Dendritic cell treated with granulocyte-macrophage colony-stimulating factor and Interleukin-4, amounts not matched to agents 40 ng/mL and 50 ng/mL, for 4 days (primary cell): ENCODE measurements at regions of chr16 and their contacts with region 1.

Region 1: GRCh38 chr16:10846213-10846998 is 27.8 kb upstream of the TVP23A start:
- H3K4me3 Mint-ChIP-seq: peak overlapping the region; percentile 75
- H3K27ac Mint-ChIP-seq: peak overlapping the region; percentile 99
- H3K4me1 Mint-ChIP-seq: peaks cover 77% of the 10 kb centered on the region
- H3K27me3 Mint-ChIP-seq: no peaks in the 10 kb centered on the region

Region 2: DNA sequence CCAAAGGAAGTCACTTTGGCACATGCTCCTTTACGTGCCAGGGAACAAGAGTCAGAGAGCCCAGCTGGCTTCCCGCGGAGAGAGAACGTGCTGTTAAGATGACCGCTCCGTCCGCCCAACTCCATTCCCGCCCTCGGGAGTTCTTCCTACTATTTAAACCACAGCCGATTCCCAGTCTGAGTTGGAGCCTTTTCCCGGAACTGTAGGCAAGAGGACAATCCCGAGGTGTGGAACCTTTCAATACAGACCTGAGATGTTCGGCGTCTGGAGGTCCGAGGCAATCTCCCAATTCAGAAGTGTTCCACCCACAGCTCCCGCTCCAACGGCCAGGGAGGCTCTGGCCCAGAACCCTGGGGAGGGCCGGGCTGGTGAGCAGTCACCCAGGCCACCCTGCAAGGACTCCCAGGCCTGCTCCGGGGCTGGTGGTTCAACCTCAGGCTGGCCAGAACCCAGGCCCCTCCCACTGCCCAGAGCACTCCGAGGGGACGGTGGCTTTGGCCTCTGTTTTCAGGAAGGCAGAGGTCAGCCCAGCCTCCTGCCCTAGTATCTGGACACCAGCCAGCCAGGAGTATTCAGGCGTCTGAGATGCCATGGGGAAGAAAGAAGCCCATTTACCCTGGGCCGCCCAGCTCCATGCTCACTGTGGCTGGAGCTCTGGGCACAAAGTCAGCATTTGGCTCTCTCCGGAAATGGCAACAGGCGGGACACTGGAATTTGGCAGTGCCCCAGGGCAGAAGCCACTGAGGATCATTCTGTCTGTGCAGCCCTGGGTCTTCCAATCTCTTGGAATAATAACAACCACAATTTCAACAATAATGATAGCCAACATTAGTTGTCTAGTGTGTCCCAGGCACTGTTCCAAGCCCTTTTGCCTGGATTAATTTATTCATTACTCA is 287.4 kb before region 1 on chr16:
- intact Hi-C with region 1: no loop called
- H3K4me3 Mint-ChIP-seq: no peak overlapping the region
- H3K27ac Mint-ChIP-seq: no peak overlapping the region
- H3K4me1 Mint-ChIP-seq: peaks cover 30% of the 10 kb centered on the region
- H3K27me3 Mint-ChIP-seq: peaks cover 10% of the 10 kb centered on the region

Region 3: DNA sequence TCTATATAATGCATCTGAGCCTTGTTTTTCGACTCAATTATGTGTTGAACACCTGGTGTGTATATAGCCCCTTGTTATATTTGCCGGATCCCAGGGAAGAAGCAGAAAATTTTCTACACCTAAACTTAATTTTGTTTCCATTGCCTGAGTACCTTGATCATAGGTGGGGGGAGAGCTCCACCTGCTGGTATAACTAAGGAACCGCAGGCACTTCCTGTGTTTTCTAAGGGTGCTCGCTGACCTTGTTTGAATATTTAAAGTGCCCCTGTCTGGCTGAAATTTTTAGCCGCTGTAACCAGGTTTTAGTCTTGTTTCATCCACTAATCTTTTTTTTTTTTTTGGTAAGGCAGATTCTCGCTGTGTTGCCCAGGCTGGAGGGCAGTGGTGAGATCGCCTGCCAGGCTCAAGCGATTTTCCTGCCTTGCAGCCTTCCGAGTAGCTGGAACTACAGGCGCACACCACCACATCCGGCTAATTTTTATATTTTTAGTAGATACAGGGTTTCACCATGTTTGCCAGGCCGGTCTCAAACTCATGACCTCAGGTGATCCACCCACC is 109.3 kb before region 1 on chr16:
- intact Hi-C with region 1: no loop called
- H3K4me3 Mint-ChIP-seq: peak overlapping the region; percentile 66
- H3K27ac Mint-ChIP-seq: peak overlapping the region; percentile 76
- H3K4me1 Mint-ChIP-seq: peaks cover 37% of the 10 kb centered on the region
- H3K27me3 Mint-ChIP-seq: no peaks in the 10 kb centered on the region

Region 4: GRCh38 chr16:10862432-10862831 is 16.0 kb after region 1 on chr16:
- intact Hi-C with region 1: loop called (anchors 2 kb)
- H3K4me3 Mint-ChIP-seq: no peak overlapping the region
- H3K27ac Mint-ChIP-seq: peak overlapping the region; percentile 59
- H3K4me1 Mint-ChIP-seq: peaks cover 65% of the 10 kb centered on the region
- H3K27me3 Mint-ChIP-seq: no peaks in the 10 kb centered on the region